Activated CD4-positive, alpha-beta memory T cell treated with anti-CD3 and anti-CD28 coated beads, Interleukin-2, amount 10 ng/mL, durations not matched to agents 7 days and 5 days (primary cell): ENCODE measurements at regions of chr18 and their contacts with region 1.

Region 1: DNA sequence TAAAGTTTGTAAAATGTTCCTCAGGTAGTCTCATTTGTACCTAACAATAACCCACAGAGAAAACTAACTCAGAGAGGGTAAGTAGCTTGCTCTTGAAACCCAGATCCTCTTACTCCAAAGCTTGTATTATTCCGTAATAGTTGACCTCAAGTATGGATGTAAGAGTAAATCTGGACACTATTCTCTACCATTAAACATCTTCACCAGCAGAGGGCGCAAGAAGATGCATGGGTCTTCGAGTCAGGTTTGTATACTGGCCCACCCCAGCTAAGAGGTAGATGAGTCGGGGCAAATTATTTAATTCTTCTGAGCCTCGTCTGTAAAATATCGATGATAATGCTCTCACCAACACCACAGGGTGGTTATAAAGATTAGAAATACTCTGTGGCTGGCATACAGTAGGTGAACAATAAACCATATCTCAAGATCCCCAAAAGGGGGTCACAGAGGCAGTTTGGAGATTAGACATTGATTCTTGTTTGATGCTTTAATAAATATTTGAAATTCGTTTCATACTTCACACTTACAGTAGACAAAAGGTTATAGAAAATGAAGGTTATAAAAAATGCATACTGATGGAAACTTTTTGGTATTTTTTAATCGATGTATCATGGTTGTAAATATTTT is 3.5 kb upstream of the CABLES1 start:
- DNase-seq: peak; percentile 59
- H3K4me3 Mint-ChIP-seq: no peak overlapping the region
- H3K27ac Mint-ChIP-seq: no peak overlapping the region
- H3K4me1 Mint-ChIP-seq: peaks cover 14% of the 10 kb centered on the region
- H3K27me3 Mint-ChIP-seq: peaks cover 23% of the 10 kb centered on the region

Region 2: GRCh38 chr18:23003289-23003688 is 128.5 kb before region 1 on chr18:
- CTCF ChIA-PET with region 1: no interaction called
- POLR2A ChIA-PET with region 1: no interaction called
- DNase-seq: no peak
- H3K4me3 Mint-ChIP-seq: no peak overlapping the region
- H3K27ac Mint-ChIP-seq: no peak overlapping the region
- H3K4me1 Mint-ChIP-seq: no peaks in the 10 kb centered on the region
- H3K27me3 Mint-ChIP-seq: no peaks in the 10 kb centered on the region

Region 3: DNA sequence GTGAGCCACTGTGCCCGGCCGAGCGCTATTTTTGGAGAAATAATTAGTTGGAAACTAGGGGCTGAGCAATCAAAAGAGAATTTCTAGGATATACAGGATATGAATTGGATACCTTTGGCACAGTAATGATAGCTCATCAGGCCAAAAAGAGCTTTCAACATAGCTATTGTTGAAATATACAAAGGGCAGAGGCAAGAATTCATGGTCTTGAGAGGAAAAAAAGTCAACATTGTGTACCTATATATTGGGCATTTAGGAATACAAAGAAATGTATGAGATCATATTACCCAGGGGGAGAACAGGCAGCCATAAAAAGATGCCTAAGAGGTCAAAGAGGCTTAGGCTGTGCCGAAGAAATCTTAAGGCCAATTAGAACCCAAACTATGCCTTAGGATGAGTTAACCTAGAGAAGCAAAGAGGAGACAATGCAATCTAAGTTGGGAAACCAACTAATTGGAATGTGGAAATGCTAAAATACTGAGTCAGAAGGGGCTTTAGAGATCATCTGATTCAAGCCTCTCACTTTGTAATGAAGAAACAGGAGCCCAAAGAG is 99.7 kb before region 1 on chr18:
- CTCF ChIA-PET with region 1: interaction called, 12 read pairs
- POLR2A ChIA-PET with region 1: no interaction called
- DNase-seq: no peak
- H3K4me3 Mint-ChIP-seq: no peak overlapping the region
- H3K27ac Mint-ChIP-seq: no peak overlapping the region
- H3K4me1 Mint-ChIP-seq: peaks cover 2% of the 10 kb centered on the region
- H3K27me3 Mint-ChIP-seq: no peaks in the 10 kb centered on the region

Region 4: GRCh38 chr18:23183411-23184155 is 51.8 kb after region 1 on chr18:
- CTCF ChIA-PET with region 1: no interaction called
- POLR2A ChIA-PET with region 1: no interaction called
- DNase-seq: no peak
- H3K4me3 Mint-ChIP-seq: no peak overlapping the region
- H3K27ac Mint-ChIP-seq: no peak overlapping the region
- H3K4me1 Mint-ChIP-seq: peaks cover 6% of the 10 kb centered on the region
- H3K27me3 Mint-ChIP-seq: peaks cover 2% of the 10 kb centered on the region

Region 5: DNA sequence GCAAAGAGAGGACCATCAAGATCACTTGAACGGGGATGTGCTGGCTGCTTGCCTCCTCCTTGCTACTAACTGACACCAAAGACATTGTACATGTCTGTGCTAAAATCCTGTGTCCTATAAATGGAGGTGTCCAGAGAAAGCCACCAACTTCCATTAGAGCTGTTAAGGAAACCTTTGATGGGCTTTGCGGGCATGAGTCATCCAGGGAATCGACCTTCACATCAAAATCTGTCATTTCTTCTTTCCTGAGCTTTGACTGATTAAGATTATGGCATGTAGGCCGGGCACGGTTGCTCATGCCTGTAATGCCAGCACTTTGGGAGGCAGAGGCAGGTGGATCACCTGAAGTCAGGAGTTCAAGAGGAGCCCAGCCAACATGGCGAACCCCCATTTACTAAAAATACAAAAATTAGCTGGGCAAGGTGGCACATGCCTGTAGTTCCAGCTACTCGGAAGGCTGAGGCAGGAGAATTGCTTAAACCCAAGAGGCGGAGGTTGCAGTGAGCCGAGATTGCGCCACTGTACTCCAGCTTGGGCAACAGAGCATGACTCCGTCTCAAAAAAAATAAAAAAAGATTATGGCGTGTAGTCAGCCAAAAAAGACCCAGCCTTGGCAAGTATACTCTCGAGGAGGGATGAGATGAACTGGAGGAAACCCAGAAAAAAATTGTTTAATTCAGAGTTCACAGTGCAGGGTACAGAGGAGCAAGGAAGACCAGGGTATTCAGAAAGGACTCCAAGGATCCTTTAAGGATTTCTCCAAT is 119.3 kb after region 1 on chr18:
- CTCF ChIA-PET with region 1: no interaction called
- POLR2A ChIA-PET with region 1: no interaction called
- DNase-seq: peak; percentile 26
- H3K4me3 Mint-ChIP-seq: no peak overlapping the region
- H3K27ac Mint-ChIP-seq: no peak overlapping the region
- H3K4me1 Mint-ChIP-seq: peaks cover 15% of the 10 kb centered on the region
- H3K27me3 Mint-ChIP-seq: no peaks in the 10 kb centered on the region

Region 6: DNA sequence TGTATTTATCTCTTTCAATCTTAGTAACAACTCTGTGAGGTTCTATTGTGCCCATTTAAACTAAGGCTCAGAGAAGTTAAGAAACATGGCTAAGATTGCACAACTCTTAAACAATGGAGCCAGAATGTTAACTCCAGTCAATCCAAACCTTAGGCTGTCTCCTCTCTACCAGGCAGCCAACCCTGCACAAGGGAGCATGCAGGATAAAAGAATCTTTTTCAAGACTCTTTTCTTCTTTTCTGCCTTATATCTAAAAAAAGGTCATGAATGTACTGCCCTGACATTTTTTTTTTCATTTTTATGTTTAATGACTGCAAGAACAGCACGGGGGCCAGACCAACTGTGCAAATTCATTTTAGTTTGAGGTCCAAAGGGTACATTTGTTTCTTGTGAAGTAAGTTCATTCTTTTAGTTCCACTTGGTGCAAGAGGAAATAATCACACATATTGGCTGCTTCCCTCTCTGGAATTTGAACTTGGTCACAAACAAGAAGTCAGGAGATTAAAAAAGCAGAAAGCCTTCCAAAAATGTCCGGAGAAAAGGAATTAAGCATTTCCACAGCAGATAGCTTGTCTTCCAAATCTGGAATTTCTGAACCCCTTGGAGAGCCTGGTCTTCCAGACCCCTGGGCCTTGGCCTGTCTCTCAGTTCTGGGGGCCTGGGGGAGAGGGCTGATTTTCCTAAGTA is 225.3 kb after region 1 on chr18:
- CTCF ChIA-PET with region 1: interaction called, 45 read pairs
- POLR2A ChIA-PET with region 1: no interaction called
- DNase-seq: no peak
- H3K4me3 Mint-ChIP-seq: no peak overlapping the region
- H3K27ac Mint-ChIP-seq: no peak overlapping the region
- H3K4me1 Mint-ChIP-seq: peaks cover 25% of the 10 kb centered on the region
- H3K27me3 Mint-ChIP-seq: no peaks in the 10 kb centered on the region

Region 7: DNA sequence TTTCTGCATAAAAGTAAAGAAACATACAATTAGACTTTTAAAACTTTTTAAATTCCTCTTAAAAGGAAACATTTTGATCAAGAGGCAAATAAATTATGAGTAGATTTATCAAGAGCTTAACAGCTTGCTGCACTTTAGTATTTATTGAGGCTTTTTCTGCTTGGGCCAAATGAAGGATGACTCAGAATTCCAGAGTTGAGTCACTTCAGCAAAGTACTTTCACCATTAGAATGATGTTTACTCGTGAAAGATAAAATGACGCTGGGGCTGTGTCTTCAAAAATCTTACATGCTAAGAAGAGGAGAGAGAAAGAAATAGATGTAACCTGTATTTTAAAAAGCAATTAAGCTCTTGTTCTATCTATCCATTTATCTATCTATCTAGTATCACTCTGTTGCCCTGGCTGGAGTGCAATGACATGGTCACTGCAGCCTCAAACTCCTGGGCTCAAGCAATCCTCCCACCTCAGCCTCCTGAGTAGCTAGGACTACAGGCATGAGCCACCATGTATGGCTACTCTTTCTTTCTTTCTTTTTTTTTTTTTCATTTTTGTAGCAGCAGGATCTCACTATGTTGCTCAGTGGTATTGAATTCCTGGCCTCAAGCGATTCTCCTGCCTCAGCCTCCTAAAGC is 246.0 kb after region 1 on chr18:
- CTCF ChIA-PET with region 1: interaction called, 25 read pairs
- POLR2A ChIA-PET with region 1: no interaction called
- DNase-seq: no peak
- H3K4me3 Mint-ChIP-seq: no peak overlapping the region
- H3K27ac Mint-ChIP-seq: no peak overlapping the region
- H3K4me1 Mint-ChIP-seq: peaks cover 14% of the 10 kb centered on the region
- H3K27me3 Mint-ChIP-seq: no peaks in the 10 kb centered on the region

Region 8: GRCh38 chr18:23412351-23412964 is 280.7 kb after region 1 on chr18:
- CTCF ChIA-PET with region 1: interaction called, 37 read pairs
- POLR2A ChIA-PET with region 1: no interaction called
- DNase-seq: no peak
- H3K4me3 Mint-ChIP-seq: no peak overlapping the region
- H3K27ac Mint-ChIP-seq: no peak overlapping the region
- H3K4me1 Mint-ChIP-seq: no peaks in the 10 kb centered on the region
- H3K27me3 Mint-ChIP-seq: no peaks in the 10 kb centered on the region